AG04449 (cell line): ENCODE measurements at regions of chr9 and their contacts with region 1.

Region 1: GRCh38 chr9:125261501-125262293 is at the start of gene GAPVD1:
- DNase-seq: no peak
- H3K4me3 ChIP-seq: peak within 1 kb of the TSS; percentile 92
- CTCF ChIP-seq: peak; percentile 30

Region 2: GRCh38 chr9:125241000-125241862 is 20.5 kb before region 1 on chr9 and contains the start of gene HSPA5:
- CTCF ChIA-PET with region 1: interaction called, 12 read pairs
- POLR2A ChIA-PET with region 1: interaction called, 24 read pairs
- DNase-seq: peak; percentile 98
- H3K4me3 ChIP-seq: peak within 1 kb of the TSS; percentile 99
- CTCF ChIP-seq: peak; percentile 31

Region 3: GRCh38 chr9:125246261-125246667 is 15.4 kb before region 1 on chr9:
- CTCF ChIA-PET with region 1: interaction called, 12 read pairs
- POLR2A ChIA-PET with region 1: interaction called, 24 read pairs
- DNase-seq: no peak
- H3K4me3 ChIP-seq: no peak overlapping the region
- CTCF ChIP-seq: no peak

Region 4: GRCh38 chr9:125343518-125344275 is 82.0 kb after region 1 on chr9:
- CTCF ChIA-PET with region 1: no interaction called
- POLR2A ChIA-PET with region 1: no interaction called
- DNase-seq: peak; percentile 10
- H3K4me3 ChIP-seq: no peak overlapping the region
- CTCF ChIP-seq: no peak